Vagina (tissue), 2 donors: ENCODE measurements at regions of chr1 and their contacts with region 1.

Region 1: DNA sequence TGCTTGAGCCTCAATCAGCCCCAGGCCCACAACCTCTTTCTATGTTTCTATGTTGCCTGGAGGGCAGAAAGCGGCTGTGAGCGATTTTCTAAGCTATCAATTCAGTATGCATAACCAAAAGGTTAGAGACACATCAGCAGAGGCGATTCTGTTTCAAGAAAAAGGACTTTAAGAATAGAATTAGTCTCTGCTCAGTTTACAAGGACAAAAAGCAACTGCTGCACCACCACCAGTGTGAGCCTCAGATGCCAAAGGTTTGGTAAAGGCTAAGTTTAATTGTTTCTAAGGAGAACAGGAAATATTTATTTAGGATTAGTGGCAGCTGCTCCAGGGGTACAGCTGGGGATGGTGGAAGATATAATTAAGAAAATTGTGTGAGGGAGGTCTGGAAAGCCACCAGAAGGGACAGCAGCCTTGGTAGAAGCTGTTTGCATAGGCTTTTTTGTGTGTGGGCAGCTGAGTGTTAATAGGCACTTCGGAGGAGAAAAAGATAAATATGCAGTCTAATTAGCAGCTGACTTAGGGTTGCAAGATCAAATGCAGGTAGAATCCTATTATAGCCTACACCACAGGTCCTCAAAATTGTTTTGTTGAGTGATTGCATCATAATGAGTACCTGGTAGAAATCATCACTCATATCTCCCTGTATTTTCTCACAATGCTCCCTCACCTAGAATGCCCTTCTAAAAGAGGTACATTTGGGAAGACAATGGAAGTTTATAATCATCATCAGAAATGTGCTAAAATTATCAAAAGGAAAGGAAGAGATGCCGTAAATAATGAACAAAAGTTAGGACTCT is 35.8 kb downstream of the ZC3H11B start:
- DNase-seq: no peak
- H3K4me3 ChIP-seq: no peak overlapping the region
- H3K27ac ChIP-seq: no peak overlapping the region
- H3K4me1 ChIP-seq: no peaks in the 10 kb centered on the region
- H3K27me3 ChIP-seq: no peaks in the 10 kb centered on the region
- CTCF ChIP-seq: no peak
- POLR2A ChIP-seq: no peak

Region 2: DNA sequence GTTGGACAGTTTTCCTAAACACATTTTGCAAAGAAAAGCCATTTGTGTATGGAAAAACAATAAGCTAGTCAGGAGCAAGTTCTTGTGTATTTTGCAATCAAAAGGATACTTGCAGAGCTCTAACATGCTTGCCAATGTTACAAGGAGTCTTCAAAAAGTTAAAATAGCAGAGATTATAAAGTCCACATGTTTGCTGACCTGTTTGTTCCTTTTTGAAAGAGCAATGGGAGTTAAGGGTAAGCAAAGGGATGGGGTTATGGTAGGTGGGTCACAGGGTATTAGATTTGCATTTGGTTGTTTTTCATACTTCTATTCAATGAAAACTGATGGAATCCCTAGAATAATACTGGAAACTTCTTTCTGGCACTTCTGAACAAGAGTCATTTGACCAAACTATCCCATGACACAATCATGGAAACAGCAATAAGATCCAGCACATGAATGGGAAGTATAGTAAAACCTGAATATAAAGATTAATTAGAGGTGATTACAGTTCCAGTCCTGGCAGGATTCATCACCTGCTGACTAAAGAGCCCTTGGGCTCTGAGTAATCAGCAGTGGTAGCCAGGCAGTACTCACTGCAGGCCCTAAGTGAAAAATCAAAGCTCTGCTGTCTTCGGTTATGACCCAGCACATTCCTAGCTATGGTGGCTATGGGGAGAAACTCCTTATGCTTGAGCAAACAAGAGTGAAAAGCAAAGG is 62.9 kb after region 1 on chr1:
- intact Hi-C with region 1: loop called (anchors 2 kb)
- DNase-seq: no peak
- H3K4me3 ChIP-seq: no peak overlapping the region
- H3K27ac ChIP-seq: peak overlapping the region; percentile 30
- H3K4me1 ChIP-seq: peaks cover 5% of the 10 kb centered on the region
- H3K27me3 ChIP-seq: no peaks in the 10 kb centered on the region
- CTCF ChIP-seq: no peak
- POLR2A ChIP-seq: no peak